ENCODE measurements at regions of chr20 and their contacts with region 1.

Region 1: GRCh38 chr20:62121776-62122631 is at the start of gene LSM14B:
- DNase-seq: peak; percentile 89 to 99 (median 96)
- ATAC-seq: peak; percentile 75
- H3K4me3 ChIP-seq: peak within 1 kb of the TSS; percentile 57
- H3K4me3 Mint-ChIP-seq: peak within 1 kb of the TSS; percentile 93
- H3K27ac ChIP-seq: peak within 1 kb of the TSS; percentile 62 to 89
- H3K27ac Mint-ChIP-seq: peak within 1 kb of the TSS; percentile 94
- H3K4me1 ChIP-seq: peaks cover 62% of the 10 kb centered on the region
- H3K4me1 Mint-ChIP-seq: peaks cover 61% of the 10 kb centered on the region
- H3K27me3 ChIP-seq: no peaks in the 10 kb centered on the region
- H3K27me3 Mint-ChIP-seq: no peaks in the 10 kb centered on the region
- CTCF ChIP-seq: no peak
- total RNA-seq, gene LSM14B: 34.5 to 35.7 TPM

Region 2: GRCh38 chr20:62025832-62026563 is 96.0 kb before region 1 on chr20:
- CTCF ChIA-PET with region 1: no interaction called
- POLR2A ChIA-PET with region 1: interaction called, 13 read pairs
- intact Hi-C with region 1: loop called in 1 of 2 experiments (anchors 5 kb)
- DNase-seq: peak in 8 of 14 experiments; percentile 7 to 66 (median 30)
- ATAC-seq: peak; percentile 79
- H3K4me3 ChIP-seq: no peak overlapping the region
- H3K4me3 Mint-ChIP-seq: peak overlapping the region; percentile 16
- H3K27ac ChIP-seq: no peak overlapping the region
- H3K27ac Mint-ChIP-seq: peak overlapping the region; percentile 70
- H3K4me1 ChIP-seq: peaks cover 35% of the 10 kb centered on the region
- H3K4me1 Mint-ChIP-seq: peaks cover 43% of the 10 kb centered on the region
- H3K27me3 ChIP-seq: no peaks in the 10 kb centered on the region
- H3K27me3 Mint-ChIP-seq: no peaks in the 10 kb centered on the region
- CTCF ChIP-seq: peak; percentile 57

Region 3: GRCh38 chr20:62136283-62137091 is 14.5 kb after region 1 on chr20:
- CTCF ChIA-PET with region 1: interaction called, 7 read pairs
- POLR2A ChIA-PET with region 1: interaction called, 78 read pairs
- intact Hi-C with region 1: loop called in 1 of 2 experiments (anchors 2 kb)
- DNase-seq: peak; percentile 63 to 89 (median 75)
- ATAC-seq: peak; percentile 70
- H3K4me3 ChIP-seq: no peak overlapping the region
- H3K4me3 Mint-ChIP-seq: peak overlapping the region; percentile 66
- H3K27ac ChIP-seq: no peak overlapping the region
- H3K27ac Mint-ChIP-seq: peak overlapping the region; percentile 77
- H3K4me1 ChIP-seq: peaks cover 48% of the 10 kb centered on the region
- H3K4me1 Mint-ChIP-seq: peaks cover 56% of the 10 kb centered on the region
- H3K27me3 ChIP-seq: no peaks in the 10 kb centered on the region
- H3K27me3 Mint-ChIP-seq: no peaks in the 10 kb centered on the region
- CTCF ChIP-seq: peak; percentile 76

Region 4: GRCh38 chr20:62182613-62183425 is 60.8 kb after region 1 on chr20 and contains the start of gene MTG2:
- CTCF ChIA-PET with region 1: no interaction called
- POLR2A ChIA-PET with region 1: no interaction called
- intact Hi-C with region 1: loop called in 1 of 2 experiments (anchors 1 kb)
- DNase-seq: peak; percentile 85 to 98 (median 92)
- ATAC-seq: peak; percentile 94
- H3K4me3 ChIP-seq: peak within 1 kb of the TSS; percentile 78
- H3K4me3 Mint-ChIP-seq: peak within 1 kb of the TSS; percentile 98
- H3K27ac ChIP-seq: peak within 1 kb of the TSS; percentile 78 to 83
- H3K27ac Mint-ChIP-seq: peak within 1 kb of the TSS; percentile 97
- H3K4me1 ChIP-seq: peaks cover 22% of the 10 kb centered on the region
- H3K4me1 Mint-ChIP-seq: peaks cover 49% of the 10 kb centered on the region
- H3K27me3 ChIP-seq: no peaks in the 10 kb centered on the region
- H3K27me3 Mint-ChIP-seq: no peaks in the 10 kb centered on the region
- CTCF ChIP-seq: no peak
- total RNA-seq, gene MTG2: 9.5 to 9.9 TPM

Region 5: DNA sequence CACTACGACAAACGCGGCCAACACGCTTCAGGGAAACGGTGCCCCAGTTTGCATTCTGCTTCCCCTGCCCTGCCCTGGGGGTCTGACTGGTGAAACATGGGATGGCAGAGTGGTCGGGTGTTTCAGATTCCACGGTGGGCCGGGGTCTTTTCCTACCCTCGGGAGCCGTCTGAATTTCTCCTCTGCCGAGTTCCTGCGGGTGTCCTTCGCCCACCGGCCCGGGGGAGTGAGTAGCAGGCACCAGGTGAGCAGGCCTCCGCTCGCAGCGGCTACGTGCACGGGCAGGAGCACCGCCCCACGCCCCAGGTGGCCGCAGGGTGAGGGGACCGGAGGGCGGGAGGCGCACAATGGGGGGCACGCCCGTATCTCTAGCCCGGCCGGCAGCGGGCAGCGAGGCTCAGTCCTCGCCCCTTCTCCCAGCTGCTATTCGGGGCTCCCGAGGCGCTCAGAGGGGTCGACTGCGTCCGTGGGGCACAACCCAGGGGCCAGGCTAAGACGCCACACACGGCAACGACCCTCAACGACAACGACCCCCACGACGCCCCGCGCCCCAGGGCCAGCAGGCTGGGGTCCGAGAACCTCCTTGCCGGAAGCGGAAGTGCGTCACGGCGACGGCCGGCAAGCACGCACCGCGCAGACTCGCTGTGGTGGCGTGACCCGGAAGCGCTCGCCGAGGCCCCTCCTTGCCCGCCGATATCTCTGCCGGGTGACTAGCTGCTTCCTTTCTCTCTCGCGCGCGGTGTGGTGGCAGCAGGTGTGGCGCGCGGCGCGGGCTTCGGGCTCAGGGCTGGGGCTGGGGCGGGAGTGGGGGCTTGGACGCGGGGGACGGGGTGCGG is 264.6 kb after region 1 on chr20 and contains the start of gene RPS21:
- CTCF ChIA-PET with region 1: no interaction called
- POLR2A ChIA-PET with region 1: no interaction called
- intact Hi-C with region 1: loop called in 1 of 2 experiments (anchors 5 kb)
- DNase-seq: peak; percentile 89 to 97 (median 92)
- ATAC-seq: peak; percentile 87
- H3K4me3 ChIP-seq: peak within 1 kb of the TSS; percentile 91
- H3K4me3 Mint-ChIP-seq: peak within 1 kb of the TSS; percentile 95
- H3K27ac ChIP-seq: peak within 1 kb of the TSS; percentile 84 to 94
- H3K27ac Mint-ChIP-seq: peak within 1 kb of the TSS; percentile 91
- H3K4me1 ChIP-seq: peaks cover 39% of the 10 kb centered on the region
- H3K4me1 Mint-ChIP-seq: peaks cover 58% of the 10 kb centered on the region
- H3K27me3 ChIP-seq: no peaks in the 10 kb centered on the region
- H3K27me3 Mint-ChIP-seq: no peaks in the 10 kb centered on the region
- CTCF ChIP-seq: no peak
- total RNA-seq, gene RPS21: 3,015 to 3,210 TPM